A549 (cell line): ENCODE measurements at regions of chr7 and their contacts with region 1.

Region 1: DNA sequence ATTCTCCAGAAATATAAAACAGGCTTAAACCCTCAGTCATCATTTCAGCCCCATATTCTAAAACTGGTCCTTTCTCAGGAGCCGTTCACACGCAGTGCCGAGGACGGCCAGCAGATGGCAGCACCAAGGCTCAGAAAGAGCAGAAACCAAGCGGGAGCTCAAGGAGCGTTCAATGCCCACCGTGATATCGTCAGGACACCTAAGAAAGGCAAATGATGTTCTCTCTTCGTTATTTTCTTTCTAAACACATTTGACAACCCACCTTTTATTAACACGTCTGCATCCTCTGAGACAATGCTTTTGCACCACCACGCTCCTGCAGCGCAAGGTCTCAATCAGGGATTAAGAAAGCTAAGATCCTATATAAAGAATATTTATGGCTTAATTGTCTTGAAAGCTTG is 45.7 kb upstream of the RBM33 start:
- DNase-seq: peak; percentile 70 to 75
- ATAC-seq: peak; percentile 74 to 91
- H3K4me3 ChIP-seq: no peak overlapping the region
- H3K27ac ChIP-seq: peak overlapping the region; percentile 16 to 49; a peak in 2 of 6 replicates
- H3K4me1 ChIP-seq: peaks cover 27% of the 10 kb centered on the region
- CTCF ChIP-seq: peak; percentile 91
- EP300 ChIP-seq: no peak
- POLR2A ChIP-seq: no peak
- RAD21 ChIP-seq: peak; percentile 88 to 89

Region 2: GRCh38 chr7:155584763-155585531 is 13.9 kb before region 1 on chr7:
- CTCF ChIA-PET with region 1: interaction called, 23 read pairs
- POLR2A ChIA-PET with region 1: no interaction called
- DNase-seq: no peak
- ATAC-seq: peak in 1 of 2 experiments; percentile 31; a peak in 1 of 6 replicates
- H3K4me3 ChIP-seq: no peak overlapping the region
- H3K27ac ChIP-seq: no peak overlapping the region
- H3K4me1 ChIP-seq: no peaks in the 10 kb centered on the region
- CTCF ChIP-seq: no peak
- EP300 ChIP-seq: no peak
- POLR2A ChIP-seq: no peak
- RAD21 ChIP-seq: no peak

Region 3: GRCh38 chr7:155665957-155666287 is 67.1 kb after region 1 on chr7:
- CTCF ChIA-PET with region 1: interaction called, 14 read pairs
- POLR2A ChIA-PET with region 1: no interaction called
- DNase-seq: peak; percentile 32 to 35
- ATAC-seq: peak; percentile 90 to 93
- H3K4me3 ChIP-seq: no peak overlapping the region
- H3K27ac ChIP-seq: peak overlapping the region; percentile 20 to 76; a peak in 4 of 6 replicates
- H3K4me1 ChIP-seq: peaks cover 24% of the 10 kb centered on the region
- CTCF ChIP-seq: no peak
- EP300 ChIP-seq: no peak
- POLR2A ChIP-seq: no peak
- RAD21 ChIP-seq: no peak

Region 4: DNA sequence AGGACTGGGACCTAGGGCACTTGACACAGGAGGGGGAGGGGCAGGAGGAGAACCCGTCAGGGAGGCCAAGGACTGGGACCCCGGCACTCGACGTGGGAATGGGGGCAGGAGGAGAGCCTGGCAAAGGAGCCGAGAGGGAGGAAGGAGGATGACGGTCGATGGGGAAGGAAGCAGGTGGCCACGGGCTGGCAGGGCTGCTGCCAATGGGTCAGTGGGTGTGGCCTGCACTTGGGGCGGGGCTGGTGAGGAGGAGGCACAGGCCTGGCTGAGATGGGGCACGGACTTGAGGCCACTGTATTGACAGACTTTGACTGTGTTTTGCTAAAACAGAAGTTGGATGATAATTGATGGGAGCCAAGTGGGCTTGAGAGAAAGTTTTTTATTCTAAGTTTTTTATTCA is 114.6 kb after region 1 on chr7:
- CTCF ChIA-PET with region 1: interaction called, 16 read pairs
- POLR2A ChIA-PET with region 1: no interaction called
- DNase-seq: no peak
- ATAC-seq: peak in 1 of 2 experiments; percentile 45; a peak in 2 of 6 replicates
- H3K4me3 ChIP-seq: no peak overlapping the region
- H3K27ac ChIP-seq: no peak overlapping the region
- H3K4me1 ChIP-seq: no peaks in the 10 kb centered on the region
- CTCF ChIP-seq: no peak
- EP300 ChIP-seq: no peak
- POLR2A ChIP-seq: no peak
- RAD21 ChIP-seq: no peak

Region 5: GRCh38 chr7:155738652-155739537 is 140.1 kb after region 1 on chr7:
- CTCF ChIA-PET with region 1: interaction called, 200 read pairs
- POLR2A ChIA-PET with region 1: no interaction called
- DNase-seq: peak; percentile 29 to 87
- ATAC-seq: peak; percentile 91 to 96
- H3K4me3 ChIP-seq: no peak overlapping the region
- H3K27ac ChIP-seq: no peak overlapping the region
- H3K4me1 ChIP-seq: peaks cover 9% of the 10 kb centered on the region; the same call in 2 of the 3 replicates
- CTCF ChIP-seq: peak; percentile 96
- EP300 ChIP-seq: no peak
- POLR2A ChIP-seq: no peak
- RAD21 ChIP-seq: peak; percentile 89 to 94